Naive thymus-derived CD4-positive, alpha-beta T cell (primary cell): ENCODE measurements at regions of chr6 and their contacts with region 1.

Region 1: DNA sequence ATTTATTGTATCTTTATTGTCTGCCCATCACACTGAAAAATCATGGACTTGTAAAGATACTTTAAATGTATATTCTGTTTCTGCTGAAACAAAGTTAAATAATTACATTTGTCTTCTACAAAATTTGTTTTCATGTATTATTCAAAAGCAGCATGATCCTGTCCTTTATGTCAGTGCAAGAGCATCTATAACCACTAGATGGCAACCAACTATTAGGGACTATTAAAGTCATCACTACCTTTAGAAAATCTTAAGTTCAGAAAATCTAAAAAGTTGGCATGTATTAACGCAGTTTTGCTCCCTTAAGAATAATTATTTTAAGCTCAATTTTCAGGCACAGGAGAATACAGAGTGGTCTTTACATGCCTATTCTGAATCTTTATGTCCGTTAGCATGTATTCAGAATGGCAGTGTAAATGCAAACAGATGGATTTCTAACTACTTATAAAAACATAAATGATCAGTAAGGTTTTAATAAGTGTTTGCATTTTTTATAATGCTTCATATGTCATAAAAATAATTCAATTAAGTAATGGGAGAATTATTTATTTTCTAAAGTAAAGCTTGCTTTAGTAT is 17.8 kb downstream of the TMEM30A start:
- DNase-seq: peak in 7 of 9 donors; percentile 11 to 43 (median 27)
- ATAC-seq: peak; percentile 78
- H3K4me3 ChIP-seq: no peak overlapping the region
- H3K4me3 Mint-ChIP-seq: no peak overlapping the region
- H3K27ac ChIP-seq: no peak overlapping the region
- H3K27ac Mint-ChIP-seq: peak overlapping the region in 1 of 9 donors; percentile 32
- H3K4me1 ChIP-seq: peaks cover 0 to 5% of the 10 kb centered on the region in 2 donors
- H3K4me1 Mint-ChIP-seq: peaks cover 0 to 52% (median 41%) of the 10 kb centered on the region in 7 donors
- H3K27me3 ChIP-seq: no peaks in the 10 kb centered on the region
- H3K27me3 Mint-ChIP-seq: no peaks in the 10 kb centered on the region

Region 2: GRCh38 chr6:75563032-75563431 is 296.2 kb after region 1 on chr6:
- CTCF ChIA-PET with region 1: no interaction called
- POLR2A ChIA-PET with region 1: no interaction called
- intact Hi-C with region 1: loop called in 1 of 2 experiments (anchors 1 kb)
- DNase-seq: peak in 2 of 9 donors; percentile 2 to 11
- ATAC-seq: peak; percentile 58
- H3K4me3 ChIP-seq: no peak overlapping the region
- H3K4me3 Mint-ChIP-seq: no peak overlapping the region
- H3K27ac ChIP-seq: no peak overlapping the region
- H3K27ac Mint-ChIP-seq: no peak overlapping the region
- H3K4me1 ChIP-seq: no peaks in the 10 kb centered on the region
- H3K4me1 Mint-ChIP-seq: peaks cover 0 to 5% (median 0%) of the 10 kb centered on the region in 7 donors
- H3K27me3 ChIP-seq: no peaks in the 10 kb centered on the region
- H3K27me3 Mint-ChIP-seq: peaks cover 17 to 47% (median 43%) of the 10 kb centered on the region in 5 donors